Dorsolateral prefrontal cortex (tissue), 120 donors: ENCODE measurements at regions of chr20 and their contacts with region 1.

Region 1: DNA sequence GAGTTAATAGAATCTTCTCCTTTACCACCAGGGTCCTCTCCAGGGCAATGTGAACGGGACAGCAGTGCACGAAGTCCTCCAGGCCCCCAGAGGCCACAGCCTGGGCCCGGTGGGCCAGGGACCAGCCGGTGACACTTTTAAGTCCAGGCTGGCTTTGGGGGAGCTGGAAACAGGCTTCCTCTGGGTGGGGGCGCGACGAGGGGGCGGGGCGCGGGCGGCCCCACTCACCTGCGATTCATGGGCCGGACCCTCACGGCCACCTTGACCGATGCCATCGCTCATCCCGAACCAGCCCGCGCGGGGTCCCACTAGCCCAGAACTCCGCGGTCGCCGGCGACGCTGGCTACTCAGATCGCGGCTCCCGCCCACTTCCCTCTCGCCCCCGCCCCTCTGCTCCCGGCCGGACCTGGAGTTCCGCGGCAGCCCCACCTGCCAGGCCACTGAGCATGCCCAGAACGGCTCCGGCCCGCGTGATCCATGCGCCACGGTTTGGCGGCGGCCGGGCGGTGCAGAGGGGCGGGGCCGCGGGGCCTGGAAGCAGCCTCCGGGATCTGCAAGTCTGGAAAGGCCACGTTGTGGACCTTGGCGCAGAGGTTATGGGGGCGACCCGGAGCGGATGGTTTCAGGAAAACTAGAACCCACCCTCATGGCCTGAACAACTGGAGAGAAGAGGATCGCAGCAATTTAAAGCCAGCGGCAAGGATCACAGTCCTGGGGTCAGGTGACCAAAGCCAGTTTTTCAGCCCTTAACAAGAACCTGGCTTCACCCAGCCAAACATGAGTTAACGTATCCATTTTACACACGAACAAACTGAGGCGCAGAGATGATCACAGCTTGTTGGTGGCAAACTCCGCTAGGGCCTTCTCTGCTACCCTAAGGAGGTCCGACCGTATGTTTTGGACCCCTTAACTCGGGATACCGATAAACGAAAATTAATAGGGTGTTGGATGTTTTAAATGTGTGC is at the start of gene KIF16B:
- DNase-seq: peak; percentile 78 to 94 (median 86)
- H3K4me3 ChIP-seq: peak within 1 kb of the TSS; percentile 56 to 100 (median 92)
- H3K27ac ChIP-seq: peak within 1 kb of the TSS in 58 of 59 donors; percentile 36 to 92 (median 81)
- H3K27me3 ChIP-seq: no peaks in the 10 kb centered on the region
- CTCF ChIP-seq: peak in 37 of 56 donors; percentile 4 to 55 (median 24)
- total RNA-seq, gene KIF16B: 17.2 to 36.0 (median 26.6) TPM

Region 2: GRCh38 chr20:16719421-16719820 is 146.1 kb after region 1 on chr20:
- intact Hi-C with region 1: loop called in 1 of 2 experiments (anchors 5 kb)
- DNase-seq: no peak
- H3K4me3 ChIP-seq: no peak overlapping the region
- H3K27ac ChIP-seq: no peak overlapping the region
- H3K27me3 ChIP-seq: peaks cover 0 to 35% (median 0%) of the 10 kb centered on the region in 45 donors
- CTCF ChIP-seq: no peak

Region 3: GRCh38 chr20:16729565-16730456 is 156.5 kb after region 1 on chr20 and contains the start of gene SNRPB2:
- intact Hi-C with region 1: loop called in 1 of 2 experiments (anchors 2 kb)
- DNase-seq: peak; percentile 89 to 97 (median 94)
- H3K4me3 ChIP-seq: peak within 1 kb of the TSS; percentile 69 to 100 (median 93)
- H3K27ac ChIP-seq: peak within 1 kb of the TSS in 58 of 59 donors; percentile 12 to 93 (median 73)
- H3K27me3 ChIP-seq: peaks cover 0 to 33% (median 0%) of the 10 kb centered on the region in 45 donors
- CTCF ChIP-seq: peak in 31 of 56 donors; percentile 6 to 53 (median 22)
- total RNA-seq, gene SNRPB2: 13.8 to 51.6 (median 33.7) TPM

Region 4: DNA sequence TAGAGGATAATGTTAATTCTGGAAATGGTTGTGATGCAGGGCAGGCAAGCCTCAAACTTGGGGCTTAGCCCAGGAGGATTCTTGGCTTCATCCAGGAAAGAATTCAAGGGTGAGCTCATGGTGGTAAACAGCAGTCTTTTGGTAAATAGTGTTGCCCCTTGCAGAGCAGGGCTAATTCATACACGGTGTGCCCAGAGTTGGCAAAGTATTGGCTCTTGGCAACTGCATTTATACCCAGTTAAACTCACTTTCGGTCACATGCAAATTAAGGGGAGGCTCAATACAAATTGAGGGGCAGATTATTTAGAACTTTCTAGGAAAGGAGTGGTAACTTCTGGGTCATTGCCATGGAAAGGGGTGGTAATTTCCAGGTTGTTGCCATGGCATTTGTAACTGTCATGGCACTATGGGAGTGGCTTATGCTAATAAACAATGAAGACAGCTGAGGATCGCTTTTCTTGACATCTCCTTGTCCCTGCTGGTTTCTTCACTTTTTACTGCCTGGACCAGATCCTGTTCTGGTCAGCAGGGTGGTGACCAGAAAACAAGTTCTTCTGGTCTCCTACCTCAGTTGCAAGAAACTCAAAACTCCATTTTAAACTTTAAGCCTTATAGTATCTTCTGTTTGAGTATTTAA is 171.0 kb after region 1 on chr20:
- intact Hi-C with region 1: loop called in 1 of 2 experiments (anchors 5 kb)
- DNase-seq: no peak
- H3K4me3 ChIP-seq: no peak overlapping the region
- H3K27ac ChIP-seq: no peak overlapping the region
- H3K27me3 ChIP-seq: no peaks in the 10 kb centered on the region
- CTCF ChIP-seq: no peak